ENCODE measurements at regions of chr6 and their contacts with region 1.

Region 1: GRCh38 chr6:41787219-41787917 is at the start of gene TOMM6:
- DNase-seq: peak; percentile 97
- ATAC-seq: peak; percentile 86
- H3K4me3 Mint-ChIP-seq: peak within 1 kb of the TSS; percentile 91
- H3K27ac Mint-ChIP-seq: peak within 1 kb of the TSS; percentile 97
- H3K4me1 Mint-ChIP-seq: peaks cover 19% of the 10 kb centered on the region
- H3K27me3 Mint-ChIP-seq: no peaks in the 10 kb centered on the region
- CTCF ChIP-seq: peak; percentile 86
- total RNA-seq, gene TOMM6: 310 to 314 TPM

Region 2: DNA sequence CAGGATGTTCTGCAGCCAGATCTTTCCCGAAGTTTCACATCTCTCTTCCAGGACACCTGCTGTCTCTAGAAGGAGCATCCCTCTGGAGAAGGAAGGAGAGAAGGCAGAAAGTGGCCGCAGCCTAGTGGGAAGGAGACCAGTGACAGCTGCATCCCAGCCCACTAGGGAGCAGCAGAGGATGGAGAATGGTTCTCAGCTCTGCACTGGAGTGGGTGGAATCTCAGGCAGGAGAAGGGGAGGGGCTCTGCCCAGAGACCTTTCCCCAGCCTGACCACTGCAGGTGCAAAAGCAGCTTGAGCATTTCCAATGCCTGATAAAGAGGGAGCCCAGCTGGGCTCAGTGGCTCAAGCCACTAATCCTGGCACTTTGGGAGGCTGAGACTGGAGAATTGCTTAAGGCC is 419.7 kb before region 1 on chr6:
- CTCF ChIA-PET with region 1: no interaction called
- POLR2A ChIA-PET with region 1: no interaction called
- intact Hi-C with region 1: no loop called
- DNase-seq: peak; percentile 18
- ATAC-seq: no peak
- H3K4me3 Mint-ChIP-seq: no peak overlapping the region
- H3K27ac Mint-ChIP-seq: no peak overlapping the region
- H3K4me1 Mint-ChIP-seq: peaks cover 16% of the 10 kb centered on the region
- H3K27me3 Mint-ChIP-seq: peaks cover 39% of the 10 kb centered on the region
- CTCF ChIP-seq: no peak

Region 3: DNA sequence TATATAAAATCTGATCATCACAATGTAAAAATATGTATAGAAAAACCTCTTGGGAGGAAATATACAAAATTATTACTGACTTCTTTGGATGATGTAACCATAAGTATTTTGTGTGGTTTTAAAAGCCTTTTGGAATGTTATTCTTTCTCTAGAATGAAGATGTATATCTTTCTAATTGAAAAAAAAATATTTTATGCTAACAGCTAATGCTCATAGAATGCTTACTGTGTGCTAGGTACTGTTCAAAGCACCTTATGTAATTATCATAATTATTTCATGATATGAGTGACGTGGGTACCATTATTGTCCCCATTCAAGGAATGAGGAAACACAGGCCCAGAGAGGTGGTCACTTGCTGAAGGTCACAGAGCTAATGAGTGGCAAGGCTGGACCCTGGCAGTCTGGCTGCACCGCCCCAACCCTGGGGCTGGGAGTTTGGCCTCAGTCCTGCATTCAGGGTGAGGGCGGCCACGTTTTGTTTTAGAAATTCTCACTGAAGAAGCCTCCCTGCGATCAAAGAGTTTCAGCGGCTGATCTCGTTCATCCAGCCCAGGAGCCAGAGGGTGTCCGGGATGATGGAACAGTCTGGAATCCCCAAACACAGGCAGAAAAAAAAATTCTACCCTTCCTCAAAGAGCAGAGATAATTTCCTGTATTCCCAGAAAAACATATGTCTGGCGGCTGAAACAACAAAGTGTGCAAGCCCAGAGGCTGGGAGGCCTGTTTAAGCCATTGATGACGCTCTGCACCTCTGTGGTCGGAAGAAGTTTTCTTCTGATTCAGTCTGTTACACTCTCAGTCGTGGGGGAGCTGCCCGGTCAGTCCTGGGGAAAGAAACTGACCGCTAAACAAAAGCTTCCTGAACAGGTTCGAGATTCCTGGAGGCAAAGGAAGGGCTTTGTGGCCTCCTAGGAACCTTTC is 89.2 kb before region 1 on chr6:
- CTCF ChIA-PET with region 1: no interaction called
- POLR2A ChIA-PET with region 1: no interaction called
- intact Hi-C with region 1: no loop called
- DNase-seq: no peak
- ATAC-seq: no peak
- H3K4me3 Mint-ChIP-seq: no peak overlapping the region
- H3K27ac Mint-ChIP-seq: no peak overlapping the region
- H3K4me1 Mint-ChIP-seq: no peaks in the 10 kb centered on the region
- H3K27me3 Mint-ChIP-seq: no peaks in the 10 kb centered on the region
- CTCF ChIP-seq: no peak

Region 4: GRCh38 chr6:41735427-41736356 is 51.7 kb before region 1 on chr6 and contains the start of gene TFEB:
- CTCF ChIA-PET with region 1: interaction called, 20 read pairs
- POLR2A ChIA-PET with region 1: interaction called, 7 read pairs
- intact Hi-C with region 1: no loop called
- DNase-seq: peak; percentile 96
- ATAC-seq: peak; percentile 74
- H3K4me3 Mint-ChIP-seq: peak within 1 kb of the TSS; percentile 84
- H3K27ac Mint-ChIP-seq: no peak within 1 kb of the TSS
- H3K4me1 Mint-ChIP-seq: peaks cover 25% of the 10 kb centered on the region
- H3K27me3 Mint-ChIP-seq: no peaks in the 10 kb centered on the region
- CTCF ChIP-seq: peak; percentile 77
- total RNA-seq, gene TFEB: 14.6 to 15.9 TPM

Region 5: GRCh38 chr6:41775293-41776181 is 11.8 kb before region 1 on chr6:
- CTCF ChIA-PET with region 1: interaction called, 26 read pairs
- POLR2A ChIA-PET with region 1: interaction called, 12 read pairs
- intact Hi-C with region 1: no loop called
- DNase-seq: peak; percentile 51
- ATAC-seq: peak; percentile 41
- H3K4me3 Mint-ChIP-seq: no peak overlapping the region
- H3K27ac Mint-ChIP-seq: no peak overlapping the region
- H3K4me1 Mint-ChIP-seq: peaks cover 12% of the 10 kb centered on the region
- H3K27me3 Mint-ChIP-seq: no peaks in the 10 kb centered on the region
- CTCF ChIP-seq: peak; percentile 74

Region 6: DNA sequence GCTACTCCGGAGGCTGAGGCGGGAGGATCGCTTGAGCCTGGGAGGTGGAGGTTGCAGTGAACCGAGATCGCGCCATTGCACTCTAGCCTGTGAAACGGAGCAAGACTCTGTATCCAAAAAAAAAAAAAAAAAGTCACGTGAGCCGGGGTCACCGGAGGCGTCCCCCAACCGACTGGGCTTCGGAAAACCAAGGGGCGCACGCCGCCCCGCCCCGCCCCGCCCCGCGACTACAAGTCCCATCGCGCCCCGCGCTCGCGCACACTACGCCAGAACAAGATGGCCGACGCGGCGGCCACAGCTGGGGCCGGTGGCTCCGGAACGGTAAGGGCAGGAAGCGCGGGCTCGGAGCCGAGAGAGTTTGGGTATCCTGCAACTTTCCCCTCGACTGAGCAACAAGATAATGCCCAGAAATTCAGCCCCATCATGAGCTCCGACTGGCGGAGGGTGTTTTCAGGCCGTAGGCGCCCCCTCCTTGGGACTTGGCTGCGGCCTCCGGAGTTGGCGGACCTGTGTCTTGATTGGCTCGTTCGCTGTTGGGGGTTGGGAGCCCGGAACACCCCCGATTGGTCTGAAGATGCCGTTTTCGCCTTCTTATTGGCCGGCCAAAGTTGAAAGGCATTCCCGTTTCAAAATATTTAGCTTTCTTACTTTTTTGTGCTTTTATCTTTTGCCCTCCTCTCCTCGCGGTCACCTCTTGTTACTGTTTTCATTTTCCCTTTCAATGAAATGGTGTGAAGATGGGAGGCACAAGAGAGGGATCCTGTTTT is 263.1 kb after region 1 on chr6 and contains the start of gene TAF8:
- CTCF ChIA-PET with region 1: interaction called, 214 read pairs
- POLR2A ChIA-PET with region 1: interaction called, 49 read pairs
- intact Hi-C with region 1: loop called (anchors 2 kb)
- DNase-seq: peak; percentile 95
- ATAC-seq: peak; percentile 72
- H3K4me3 Mint-ChIP-seq: peak within 1 kb of the TSS; percentile 93
- H3K27ac Mint-ChIP-seq: peak within 1 kb of the TSS; percentile 98
- H3K4me1 Mint-ChIP-seq: peaks cover 65% of the 10 kb centered on the region
- H3K27me3 Mint-ChIP-seq: no peaks in the 10 kb centered on the region
- CTCF ChIP-seq: no peak
- total RNA-seq, gene TAF8: 40.0 to 42.3 TPM